GM12878 (cell line): ENCODE measurements at regions of chr2 and their contacts with region 1.

Region 1: DNA sequence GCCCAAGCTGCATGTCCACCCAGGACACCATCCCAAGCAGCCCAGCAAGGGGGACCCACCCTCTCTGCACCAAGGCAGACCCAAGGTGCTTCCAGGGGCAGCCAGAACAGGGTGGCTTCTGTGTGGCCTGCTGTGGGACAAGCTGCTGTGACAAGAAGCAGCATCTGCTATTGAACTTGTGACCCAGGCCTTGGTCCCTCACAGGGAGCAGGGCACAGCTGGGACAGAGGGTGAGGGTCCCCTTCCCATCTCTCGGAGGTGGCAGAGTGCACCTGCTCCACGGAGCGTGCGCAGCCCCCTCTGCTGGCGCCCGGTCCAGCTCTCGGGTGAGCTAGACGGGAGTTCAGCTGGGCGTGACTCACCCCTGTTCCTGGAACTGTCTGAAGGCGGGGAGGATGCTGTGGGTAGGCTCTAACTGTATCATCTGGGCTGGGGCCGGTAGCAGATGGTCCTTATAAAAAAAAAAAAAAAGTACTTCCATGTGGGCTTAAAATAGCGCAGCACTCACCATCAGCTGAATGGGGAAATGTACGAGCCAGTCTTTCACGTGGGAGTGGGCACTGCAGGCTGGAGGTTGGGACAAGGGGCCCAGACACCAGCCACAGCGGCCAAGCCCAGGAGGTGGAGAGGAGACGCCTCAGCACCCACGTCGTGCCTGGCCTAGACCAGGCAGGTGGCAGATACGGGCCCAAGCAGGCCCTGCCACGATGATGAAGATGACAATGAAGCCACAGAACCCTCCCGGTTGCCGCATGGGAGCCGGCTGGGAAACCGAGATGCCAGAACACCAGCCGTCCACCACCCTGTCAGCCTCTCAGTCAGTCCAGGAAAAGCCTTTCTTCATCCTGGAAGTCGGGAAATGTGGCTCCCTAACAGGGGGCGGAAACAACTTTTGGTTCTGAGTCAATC is 136.8 kb upstream of the ID2 start:
- DNase-seq: peak; percentile 62
- ATAC-seq: peak; percentile 71
- H3K4me3 ChIP-seq: no peak overlapping the region
- H3K27ac ChIP-seq: peak overlapping the region; percentile 95
- H3K4me1 ChIP-seq: peaks cover 56% of the 10 kb centered on the region
- H3K27me3 ChIP-seq: no peaks in the 10 kb centered on the region
- CTCF ChIP-seq: peak; percentile 44 to 66 (median 54); a peak in 5 of 6 replicates
- EP300 ChIP-seq: peak; percentile 8 to 64; a peak in 2 of 4 replicates
- POLR2A ChIP-seq: peak; percentile 29
- RAD21 ChIP-seq: peak; percentile 60

Region 2: GRCh38 chr2:7673853-7674252 is 871.2 kb before region 1 on chr2:
- CTCF ChIA-PET with region 1: no interaction called
- POLR2A ChIA-PET with region 1: no interaction called
- RAD21 ChIA-PET with region 1: no interaction called
- SMC1A ChIA-PET with region 1: no interaction called
- in situ Hi-C with region 1: no loop called
- intact Hi-C with region 1: no loop called
- DNase-seq: no peak
- ATAC-seq: no peak
- H3K4me3 ChIP-seq: no peak overlapping the region
- H3K27ac ChIP-seq: no peak overlapping the region
- H3K4me1 ChIP-seq: no peaks in the 10 kb centered on the region
- H3K27me3 ChIP-seq: no peaks in the 10 kb centered on the region
- CTCF ChIP-seq: no peak
- EP300 ChIP-seq: no peak
- POLR2A ChIP-seq: no peak
- RAD21 ChIP-seq: no peak

Region 3: DNA sequence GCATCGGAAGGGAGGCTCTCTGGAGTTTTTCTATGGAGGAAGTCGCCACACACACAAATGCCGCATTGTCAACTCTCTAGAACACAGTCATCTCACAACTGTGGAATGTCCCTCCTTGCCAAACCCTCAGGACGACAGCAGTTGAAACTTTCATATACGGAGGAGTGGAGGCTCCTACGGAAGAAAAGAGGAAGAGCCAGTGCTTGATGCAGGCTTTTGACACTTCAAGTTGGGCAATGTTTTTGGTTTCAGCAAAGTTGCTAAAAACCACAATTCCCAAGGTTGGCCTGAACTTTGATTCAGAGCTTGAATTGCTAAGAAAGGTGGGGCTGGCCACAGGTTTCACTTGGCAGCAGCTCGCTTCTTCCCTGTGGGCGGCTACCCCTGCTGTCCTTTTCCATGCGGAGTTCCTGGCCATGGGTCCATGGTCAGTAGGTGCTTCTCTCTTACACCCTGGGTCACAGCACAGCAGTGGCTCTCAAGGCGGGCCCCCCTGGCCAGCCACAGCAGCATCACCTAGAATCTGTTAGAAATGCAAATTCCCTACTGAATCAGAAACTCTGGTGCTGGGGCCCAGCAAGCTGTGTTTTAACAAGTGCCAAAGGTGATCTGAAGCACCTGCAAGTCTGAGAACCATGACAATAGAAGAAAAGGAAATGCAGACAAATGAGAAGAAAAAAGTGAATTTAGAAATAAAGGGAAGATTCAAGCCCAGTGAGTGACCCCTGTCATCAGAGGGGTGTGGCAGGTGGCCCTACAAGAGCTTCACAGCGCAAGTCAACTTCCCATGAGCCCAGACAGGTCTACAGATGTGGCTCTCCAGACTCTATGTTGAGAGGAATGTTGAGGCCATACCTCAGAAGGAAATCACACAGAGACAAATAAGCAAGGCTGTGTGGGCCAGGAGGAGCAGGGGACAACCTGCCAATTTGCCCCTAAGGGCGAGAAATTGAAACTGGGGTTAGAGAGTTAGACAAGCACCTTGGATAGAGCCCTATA is 771.4 kb before region 1 on chr2:
- CTCF ChIA-PET with region 1: no interaction called
- POLR2A ChIA-PET with region 1: no interaction called
- RAD21 ChIA-PET with region 1: no interaction called
- SMC1A ChIA-PET with region 1: no interaction called
- in situ Hi-C with region 1: no loop called
- intact Hi-C with region 1: loop called (anchors 2 kb)
- DNase-seq: peak; percentile 91
- ATAC-seq: peak; percentile 86
- H3K4me3 ChIP-seq: peak overlapping the region; percentile 45
- H3K27ac ChIP-seq: peak overlapping the region; percentile 48
- H3K4me1 ChIP-seq: peaks cover 19% of the 10 kb centered on the region
- H3K27me3 ChIP-seq: no peaks in the 10 kb centered on the region
- CTCF ChIP-seq: no peak
- EP300 ChIP-seq: peak; percentile 98 to 99
- POLR2A ChIP-seq: no peak
- RAD21 ChIP-seq: peak; percentile 21; the same call in 1 of the 2 replicates

Region 4: DNA sequence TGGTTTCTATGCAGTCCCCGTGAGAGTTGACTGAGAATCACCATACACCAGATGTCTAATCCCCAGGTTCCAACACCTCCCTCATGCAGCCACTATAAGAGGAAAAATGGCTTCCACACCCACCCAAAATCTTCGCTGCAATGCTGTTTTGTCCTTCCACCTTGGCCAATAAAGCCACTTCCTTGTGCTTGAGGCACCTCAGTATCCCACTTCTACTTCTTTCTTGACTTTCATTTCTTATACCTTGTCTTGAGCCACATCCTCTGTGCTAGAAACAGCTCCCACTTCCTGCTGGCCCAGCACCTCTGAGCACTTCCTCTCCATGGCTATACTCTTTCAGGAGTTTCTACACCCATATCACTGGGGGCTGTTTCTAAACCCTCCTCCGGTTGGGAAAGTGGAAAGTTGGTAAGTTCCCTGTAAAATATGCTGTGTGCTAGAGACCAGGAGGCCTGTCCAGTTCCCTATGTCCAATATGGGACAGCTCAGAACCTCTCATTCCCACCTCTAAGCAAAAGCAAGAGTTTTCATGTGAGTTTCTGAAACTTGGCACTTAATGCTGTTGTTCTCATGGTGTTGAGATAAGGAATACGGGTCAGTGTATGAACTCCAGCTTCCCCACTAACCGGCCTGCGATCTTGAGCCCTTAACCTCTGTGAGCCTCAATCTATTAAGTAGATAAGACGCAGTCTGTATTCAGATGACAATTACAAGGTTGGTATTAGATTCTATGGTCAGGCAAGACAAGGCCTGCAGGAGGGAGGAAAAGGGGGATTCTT is 72.3 kb before region 1 on chr2:
- CTCF ChIA-PET with region 1: interaction called, 8 read pairs
- POLR2A ChIA-PET with region 1: interaction called, 7 read pairs
- RAD21 ChIA-PET with region 1: interaction called, 16 read pairs
- SMC1A ChIA-PET with region 1: interaction called, 19 read pairs
- in situ Hi-C with region 1: no loop called
- intact Hi-C with region 1: no loop called
- DNase-seq: no peak
- ATAC-seq: peak; percentile 20
- H3K4me3 ChIP-seq: no peak overlapping the region
- H3K27ac ChIP-seq: peak overlapping the region; percentile 33
- H3K4me1 ChIP-seq: peaks cover 59% of the 10 kb centered on the region
- H3K27me3 ChIP-seq: no peaks in the 10 kb centered on the region
- CTCF ChIP-seq: no peak
- EP300 ChIP-seq: peak; percentile 10 to 24; a peak in 1 of 4 replicates
- POLR2A ChIP-seq: no peak
- RAD21 ChIP-seq: no peak

Region 5: GRCh38 chr2:8514796-8515758 is 30.0 kb before region 1 on chr2:
- CTCF ChIA-PET with region 1: interaction called, 64 read pairs
- POLR2A ChIA-PET with region 1: interaction called, 43 read pairs
- RAD21 ChIA-PET with region 1: interaction called, 322 read pairs
- SMC1A ChIA-PET with region 1: interaction called, 284 read pairs
- in situ Hi-C with region 1: no loop called
- intact Hi-C with region 1: loop called (anchors 1 kb)
- DNase-seq: peak; percentile 99
- ATAC-seq: peak; percentile 82
- H3K4me3 ChIP-seq: peak overlapping the region; percentile 51; the same call in 1 of the 2 replicates
- H3K27ac ChIP-seq: peak overlapping the region; percentile 93
- H3K4me1 ChIP-seq: peaks cover 46% of the 10 kb centered on the region
- H3K27me3 ChIP-seq: no peaks in the 10 kb centered on the region
- CTCF ChIP-seq: no peak
- EP300 ChIP-seq: peak; percentile 76 to 95; a peak in 3 of 4 replicates
- POLR2A ChIP-seq: no peak
- RAD21 ChIP-seq: peak; percentile 36; the same call in 1 of the 2 replicates

Region 6: GRCh38 chr2:8574144-8575037 is 29.4 kb after region 1 on chr2:
- CTCF ChIA-PET with region 1: interaction called, 12 read pairs
- POLR2A ChIA-PET with region 1: interaction called, 29 read pairs
- RAD21 ChIA-PET with region 1: interaction called, 77 read pairs
- SMC1A ChIA-PET with region 1: interaction called, 67 read pairs
- in situ Hi-C with region 1: no loop called
- intact Hi-C with region 1: loop called (anchors 1 kb)
- DNase-seq: no peak
- ATAC-seq: peak; percentile 77
- H3K4me3 ChIP-seq: peak overlapping the region; percentile 52; the same call in 1 of the 2 replicates
- H3K27ac ChIP-seq: peak overlapping the region; percentile 51
- H3K4me1 ChIP-seq: peaks cover 46% of the 10 kb centered on the region
- H3K27me3 ChIP-seq: no peaks in the 10 kb centered on the region
- CTCF ChIP-seq: 0 out of 6 replicates have a peak, but pooled peaks of 1 of the 3 experiments have one; percentile 9
- EP300 ChIP-seq: no peak
- POLR2A ChIP-seq: no peak
- RAD21 ChIP-seq: 0 out of 2 replicates have a peak, but pooled peaks have one; percentile 12

Region 7: GRCh38 chr2:8628230-8629209 is 83.5 kb after region 1 on chr2:
- CTCF ChIA-PET with region 1: no interaction called
- POLR2A ChIA-PET with region 1: no interaction called
- RAD21 ChIA-PET with region 1: interaction called, 3 read pairs
- SMC1A ChIA-PET with region 1: interaction called, 4 read pairs
- in situ Hi-C with region 1: no loop called
- intact Hi-C with region 1: loop called (anchors 5 kb)
- DNase-seq: no peak
- ATAC-seq: peak; percentile 84
- H3K4me3 ChIP-seq: no peak overlapping the region
- H3K27ac ChIP-seq: no peak overlapping the region
- H3K4me1 ChIP-seq: peaks cover 9% of the 10 kb centered on the region; the same call in 1 of the 2 replicates
- H3K27me3 ChIP-seq: peaks cover 0 to 3% of the 10 kb centered on the region in 2 experiments; a peak in 1 of 4 replicates
- CTCF ChIP-seq: peak; percentile 8 to 23 (median 15); a peak in 2 of 6 replicates
- EP300 ChIP-seq: no peak
- POLR2A ChIP-seq: no peak
- RAD21 ChIP-seq: peak; percentile 12; the same call in 1 of the 2 replicates